ENCODE measurements at regions of chr11 and their contacts with region 1.

Region 1: GRCh38 chr11:119295178-119295577 is 21.8 kb downstream of the MCAM start:
- DNase-seq: no peak
- CTCF ChIP-seq: peak; percentile 21

Region 2: GRCh38 chr11:119306373-119306890 is 11.3 kb after region 1 on chr11:
- CTCF ChIA-PET with region 1: interaction called, 21 read pairs
- POLR2A ChIA-PET with region 1: no interaction called
- DNase-seq: no peak
- CTCF ChIP-seq: no peak